Activated CD4-positive, alpha-beta T cell treated with anti-CD3 and anti-CD28 coated beads, Interleukin-2, amount 10 ng/mL, durations not matched to agents 24 days and 14 days (primary cell): ENCODE measurements at regions of chr11 and their contacts with region 1.

Region 1: DNA sequence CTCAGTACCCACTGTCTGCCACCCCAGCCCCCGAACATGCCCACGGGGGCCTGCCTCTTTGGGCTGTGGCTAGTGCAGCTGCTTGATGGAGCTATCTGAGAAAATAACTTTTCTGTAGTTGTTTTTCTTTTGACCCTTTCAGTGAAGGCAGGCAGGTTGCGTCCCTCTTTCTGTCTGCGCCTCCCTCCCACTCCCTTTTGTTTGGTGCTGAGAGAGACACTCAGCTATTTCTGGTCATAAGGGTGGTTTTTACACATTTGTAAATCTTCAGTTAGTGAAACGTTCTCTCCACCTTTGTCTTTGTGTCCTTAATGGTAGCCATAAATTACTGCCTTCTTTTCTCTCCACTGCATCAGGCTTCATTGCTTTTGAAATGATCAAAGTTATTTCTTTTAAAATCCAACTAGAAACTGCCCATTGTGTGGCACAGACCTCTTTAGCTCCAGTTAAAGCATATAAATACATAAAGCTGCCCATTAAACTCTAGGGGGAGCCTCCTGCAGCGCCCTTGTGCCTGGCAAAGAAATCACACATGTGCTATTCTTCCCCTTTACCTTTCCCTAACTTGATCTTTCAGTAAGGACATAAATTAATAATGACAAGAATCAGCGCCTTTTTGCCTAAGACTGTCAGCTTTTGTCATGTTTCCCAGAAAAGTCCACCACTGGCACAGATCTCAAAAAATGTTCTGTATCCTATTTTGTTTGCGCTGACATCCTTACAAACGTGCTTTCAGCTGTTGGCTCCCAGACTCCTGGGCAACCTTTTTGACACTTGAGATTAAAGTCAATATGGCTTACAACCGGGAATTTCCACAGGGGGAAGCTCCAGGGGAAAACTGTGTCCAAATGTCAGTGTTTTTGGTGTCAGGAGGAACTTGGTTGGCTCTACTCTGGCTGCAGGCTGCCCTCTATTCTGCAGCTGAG is 1.7 kb upstream of the SCUBE2 start:
- DNase-seq: no peak
- H3K4me3 Mint-ChIP-seq: peak overlapping the region; percentile 58
- H3K27ac Mint-ChIP-seq: no peak overlapping the region
- H3K4me1 Mint-ChIP-seq: peaks cover 2% of the 10 kb centered on the region
- H3K27me3 Mint-ChIP-seq: peaks cover 57% of the 10 kb centered on the region

Region 2: DNA sequence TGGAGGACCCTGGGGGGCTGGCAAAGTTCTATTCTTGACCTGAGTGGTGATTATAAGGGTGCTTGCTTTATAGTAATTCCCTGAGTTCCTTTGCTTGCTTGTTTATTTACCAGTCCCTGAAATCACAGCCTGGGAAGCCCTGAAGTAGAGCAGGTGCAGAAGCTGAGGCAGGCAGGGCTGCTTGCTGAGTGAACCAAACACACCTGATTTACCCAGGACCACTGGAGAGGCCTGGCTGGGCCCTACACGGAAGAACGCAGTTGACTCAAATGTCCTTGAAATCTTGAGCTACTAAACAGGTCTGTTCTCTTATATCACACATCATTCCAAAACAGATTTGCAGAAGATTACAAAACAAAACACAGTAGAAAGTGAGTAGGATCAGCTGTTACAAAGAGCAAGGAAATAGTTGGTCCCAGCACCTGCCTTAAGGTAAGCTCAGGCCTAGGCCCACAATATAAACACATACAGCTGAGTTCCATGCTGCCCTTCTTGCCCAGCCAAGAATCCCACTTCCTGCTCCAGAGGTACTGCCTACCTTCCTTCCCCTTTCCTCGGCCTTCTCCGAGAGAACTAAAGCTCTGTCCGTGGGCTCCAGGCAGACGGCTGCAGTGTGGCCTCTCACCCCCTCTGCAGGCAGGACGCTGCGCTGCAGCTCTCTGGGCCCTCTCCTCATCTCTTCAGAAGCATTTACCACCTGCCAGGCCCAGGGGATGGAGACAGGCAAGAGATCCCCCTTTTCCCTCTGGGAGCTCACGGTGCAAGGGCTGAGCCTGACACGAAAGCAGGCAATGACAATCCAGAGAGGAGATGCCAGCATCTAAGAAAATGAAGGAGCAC is 44.4 kb after region 1 on chr11:
- intact Hi-C with region 1: loop called (anchors 5 kb)
- DNase-seq: peak; percentile 92
- H3K4me3 Mint-ChIP-seq: no peak overlapping the region
- H3K27ac Mint-ChIP-seq: peak overlapping the region; percentile 80
- H3K4me1 Mint-ChIP-seq: peaks cover 29% of the 10 kb centered on the region
- H3K27me3 Mint-ChIP-seq: no peaks in the 10 kb centered on the region